Left colon (tissue), 2 donors: ENCODE measurements at regions of chr1 and their contacts with region 1.

Region 1: GRCh38 chr1:150561974-150562445 is 12.8 kb downstream of the ADAMTSL4 start:
- DNase-seq: peak; percentile 94 to 97
- ATAC-seq: peak; percentile 78

Region 2: DNA sequence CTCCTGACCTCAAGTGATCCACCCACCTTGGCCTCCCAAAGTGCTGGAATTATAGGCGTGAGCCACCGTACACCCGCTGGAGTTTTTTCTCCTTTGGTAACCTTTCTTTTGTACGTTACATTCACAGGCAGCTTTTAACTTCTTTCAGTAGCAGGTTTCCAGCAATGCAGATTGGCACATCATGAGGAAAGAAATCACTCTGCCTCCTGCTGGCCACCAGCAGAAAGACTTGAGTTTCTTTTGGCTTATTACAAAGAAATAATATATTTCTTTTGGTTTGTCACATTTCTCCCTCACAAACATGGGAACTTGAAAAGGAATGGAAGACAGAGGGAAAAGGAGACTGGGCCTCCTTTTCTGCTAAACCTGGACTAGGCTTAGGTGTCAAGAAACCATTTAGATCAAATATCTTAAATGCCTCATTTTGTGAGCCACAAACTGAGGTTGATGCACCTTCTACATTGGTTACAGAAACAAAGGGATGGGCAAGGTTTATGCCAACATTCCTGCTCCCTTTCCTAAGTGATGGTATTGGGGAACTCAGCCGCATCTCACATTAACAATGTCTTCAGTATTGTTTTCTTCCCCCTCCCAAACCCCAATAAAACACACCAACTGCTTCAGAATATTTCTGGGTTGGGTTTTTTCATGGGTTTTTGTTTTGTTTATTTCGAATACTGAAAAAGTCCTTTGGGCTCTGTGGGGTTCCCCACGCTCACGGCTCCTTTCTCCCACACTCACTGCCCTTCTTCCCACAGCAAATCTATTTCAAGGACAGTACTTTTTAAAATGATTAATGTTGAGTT is 59.7 kb after region 1 on chr1:
- intact Hi-C with region 1: loop called (anchors 5 to 10 kb)
- DNase-seq: peak in 1 of 2 donors; percentile 60
- ATAC-seq: peak; percentile 34